K562 (cell line): ENCODE measurements at regions of chr12 and their contacts with region 1.

Region 1: DNA sequence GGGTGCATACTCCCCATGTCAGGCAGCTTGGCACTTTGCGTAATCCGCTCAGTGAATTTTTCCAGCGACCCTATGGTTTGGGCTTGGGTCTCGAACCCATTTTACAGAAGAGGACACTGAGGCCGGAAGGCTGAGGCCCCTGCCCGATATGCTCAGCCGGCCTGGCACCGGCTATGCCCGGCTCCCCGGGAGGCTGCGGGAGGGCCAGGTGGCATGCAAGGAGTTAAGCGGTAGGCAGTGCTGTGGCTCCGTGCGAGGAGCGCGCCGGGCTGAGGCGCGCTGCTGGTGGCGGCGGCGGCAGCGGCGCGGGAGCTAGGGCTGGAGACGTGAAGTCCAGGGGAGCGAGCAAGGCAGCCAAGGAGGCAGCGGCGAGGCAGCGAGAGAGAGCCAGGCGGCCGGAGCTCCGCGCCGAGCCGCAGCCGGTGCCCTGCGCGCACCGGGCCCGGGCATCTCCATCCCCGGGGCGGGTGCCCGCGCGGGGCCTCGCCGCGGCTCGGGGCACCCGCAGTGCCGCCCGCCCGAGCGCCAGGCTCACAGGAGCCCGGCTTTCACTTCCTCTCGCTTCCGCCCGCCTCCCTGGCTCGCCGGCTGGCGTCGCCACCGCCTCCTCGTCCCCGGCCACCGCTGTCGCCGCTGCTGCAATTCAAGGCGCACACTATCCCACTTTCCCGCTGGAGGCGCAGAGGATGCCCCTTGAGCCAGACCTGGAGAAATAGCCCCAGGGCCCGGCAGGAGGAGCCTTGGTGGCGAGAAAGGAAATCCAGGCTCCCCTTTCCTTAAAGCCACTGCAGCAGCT is at the start of gene WSCD2:
- DNase-seq: peak; percentile 52 to 80 (median 56)
- ATAC-seq: peak; percentile 91
- H3K4me3 ChIP-seq: peak within 1 kb of the TSS; percentile 56
- H3K27ac ChIP-seq: peak within 1 kb of the TSS; percentile 58; the same call in 2 of the 3 replicates
- H3K4me1 ChIP-seq: peaks cover 28 to 32% of the 10 kb centered on the region in 2 experiments
- H3K27me3 ChIP-seq: no peaks in the 10 kb centered on the region; a peak in 1 of 5 replicates
- CTCF ChIP-seq: peak; percentile 56 to 95 (median 84); a peak in 5 of 6 replicates
- EP300 ChIP-seq: no peak
- POLR2A ChIP-seq: peak; percentile 32; the same call in 1 of the 2 replicates
- RAD21 ChIP-seq: peak; percentile 57 to 69
- polyA plus RNA-seq, gene WSCD2: 0.72 to 0.89 TPM

Region 2: DNA sequence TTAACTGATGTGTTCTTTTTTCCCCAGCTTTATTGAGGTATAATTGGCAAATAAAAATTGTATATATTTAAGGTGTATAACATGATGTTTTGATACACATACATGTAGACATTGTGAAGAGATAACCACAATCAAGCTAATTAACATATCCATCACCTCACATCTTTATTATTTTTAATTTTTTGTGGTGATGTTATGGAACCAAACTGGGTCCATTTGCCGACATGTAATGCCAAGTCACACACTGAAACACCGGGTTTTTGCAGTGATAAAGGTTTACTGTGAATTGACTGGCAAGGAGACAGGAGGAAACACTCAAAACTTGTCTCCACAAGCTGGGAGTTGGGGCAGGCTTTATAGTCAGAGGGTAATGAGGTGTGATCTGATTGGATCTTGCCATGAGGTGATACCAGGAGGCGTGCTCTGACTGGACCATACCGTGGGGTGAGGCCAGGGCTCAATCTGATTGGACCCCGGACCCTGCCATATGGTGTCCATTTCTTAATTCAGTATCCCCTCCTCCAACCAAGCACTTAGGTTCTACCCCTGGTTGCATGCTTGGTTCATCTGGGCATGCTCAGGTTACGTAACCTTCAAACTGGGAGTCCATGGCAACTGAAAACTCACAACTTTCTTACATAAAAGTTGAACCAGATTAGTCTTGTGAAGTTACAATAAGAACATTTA is 11.9 kb before region 1 on chr12:
- CTCF ChIA-PET with region 1: no interaction called
- POLR2A ChIA-PET with region 1: interaction called, 4 read pairs
- in situ Hi-C with region 1: no loop called
- intact Hi-C with region 1: loop called (anchors 1 kb)
- DNase-seq: peak; percentile 78 to 93 (median 86)
- ATAC-seq: peak; percentile 87
- H3K4me3 ChIP-seq: no peak overlapping the region
- H3K27ac ChIP-seq: peak overlapping the region; percentile 90
- H3K4me1 ChIP-seq: peaks cover 32 to 66% of the 10 kb centered on the region in 2 experiments
- H3K27me3 ChIP-seq: no peaks in the 10 kb centered on the region
- CTCF ChIP-seq: no peak
- EP300 ChIP-seq: peak; percentile 58
- POLR2A ChIP-seq: peak; percentile 99
- RAD21 ChIP-seq: no peak